ENCODE measurements at regions of chr4 and their contacts with region 1.

Region 1: GRCh38 chr4:15001869-15002658 is at the start of gene CPEB2:
- DNase-seq: peak; percentile 92
- H3K4me3 Mint-ChIP-seq: peak within 1 kb of the TSS; percentile 89
- H3K27ac Mint-ChIP-seq: peak within 1 kb of the TSS; percentile 95
- H3K4me1 Mint-ChIP-seq: peaks cover 7% of the 10 kb centered on the region
- H3K27me3 Mint-ChIP-seq: no peaks in the 10 kb centered on the region
- CTCF ChIP-seq: no peak
- total RNA-seq, gene CPEB2: 13.8 and 21.8 TPM in 2 replicates

Region 2: DNA sequence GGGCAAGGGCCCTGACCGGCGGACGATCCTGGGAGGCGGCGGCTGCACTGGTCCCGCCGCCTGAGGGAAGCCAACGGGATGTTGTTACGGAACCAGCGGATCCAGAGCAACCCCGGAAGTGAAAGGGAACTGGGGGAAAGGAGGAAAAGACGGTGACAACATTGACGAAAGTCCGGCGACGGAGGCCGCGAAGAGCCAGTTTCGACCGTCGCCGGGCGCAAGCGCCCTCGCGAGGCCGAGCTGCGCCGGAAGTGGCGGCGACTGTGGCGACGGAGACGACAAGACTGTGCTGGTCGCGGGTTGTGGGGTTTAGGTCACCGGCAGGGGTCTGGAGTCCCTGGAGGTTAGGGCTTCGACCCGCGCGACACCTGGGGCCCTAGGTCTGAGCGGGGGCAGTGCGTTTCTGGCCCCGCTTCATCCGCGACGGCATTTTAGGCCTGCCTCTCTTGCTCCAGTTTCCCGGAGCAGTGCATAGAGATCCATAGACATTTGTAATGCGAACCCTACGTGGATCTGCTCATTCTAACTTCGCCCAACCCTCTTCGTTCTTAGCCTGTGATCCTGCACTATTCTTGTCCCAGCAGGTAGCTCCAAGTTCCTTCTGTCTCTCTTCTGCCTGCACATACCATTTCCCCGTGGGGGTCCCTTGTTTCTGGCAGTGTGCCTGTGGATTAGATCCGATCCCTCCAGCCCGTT is 1374.3 kb before region 1 on chr4 and contains the start of gene BOD1L1:
- CTCF ChIA-PET with region 1: no interaction called
- POLR2A ChIA-PET with region 1: interaction called, 9 read pairs
- intact Hi-C with region 1: loop called (anchors 10 kb)
- DNase-seq: peak; percentile 91
- H3K4me3 Mint-ChIP-seq: peak within 1 kb of the TSS; percentile 89
- H3K27ac Mint-ChIP-seq: peak within 1 kb of the TSS; percentile 99
- H3K4me1 Mint-ChIP-seq: peaks cover 19% of the 10 kb centered on the region
- H3K27me3 Mint-ChIP-seq: no peaks in the 10 kb centered on the region
- CTCF ChIP-seq: peak; percentile 11
- total RNA-seq, gene BOD1L1: 46.8 and 55.4 TPM in 2 replicates

Region 3: GRCh38 chr4:13907255-13907751 is 1094.8 kb before region 1 on chr4:
- CTCF ChIA-PET with region 1: interaction called, 3 read pairs
- POLR2A ChIA-PET with region 1: interaction called, 5 read pairs
- intact Hi-C with region 1: loop called (anchors 5 kb)
- DNase-seq: peak; percentile 95
- H3K4me3 Mint-ChIP-seq: peak overlapping the region; percentile 9
- H3K27ac Mint-ChIP-seq: peak overlapping the region; percentile 96
- H3K4me1 Mint-ChIP-seq: peaks cover 40% of the 10 kb centered on the region
- H3K27me3 Mint-ChIP-seq: no peaks in the 10 kb centered on the region
- CTCF ChIP-seq: peak; percentile 35

Region 4: GRCh38 chr4:14671146-14671545 is 330.9 kb before region 1 on chr4:
- CTCF ChIA-PET with region 1: no interaction called
- POLR2A ChIA-PET with region 1: no interaction called
- intact Hi-C with region 1: no loop called
- DNase-seq: no peak
- H3K4me3 Mint-ChIP-seq: no peak overlapping the region
- H3K27ac Mint-ChIP-seq: no peak overlapping the region
- H3K4me1 Mint-ChIP-seq: peaks cover 7% of the 10 kb centered on the region
- H3K27me3 Mint-ChIP-seq: no peaks in the 10 kb centered on the region
- CTCF ChIP-seq: no peak

Region 5: DNA sequence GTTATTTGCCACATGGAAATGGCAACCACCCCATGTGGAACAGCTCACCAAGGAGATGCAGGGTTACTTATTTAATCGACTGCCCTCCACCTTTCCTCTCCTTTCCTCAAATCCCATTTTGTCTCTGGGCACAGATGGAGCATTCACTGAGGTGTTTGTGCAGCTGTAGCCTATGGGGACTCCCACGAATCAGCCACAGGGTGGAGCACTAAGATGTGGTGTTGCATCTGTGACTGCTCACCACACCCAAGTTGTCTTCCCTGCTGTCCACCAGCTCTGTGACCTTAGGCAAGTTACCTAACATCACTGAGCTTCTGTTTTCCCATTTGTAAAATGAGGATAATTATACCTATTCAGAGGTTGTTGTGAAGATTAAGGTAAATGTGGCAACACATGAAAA is 252.2 kb before region 1 on chr4:
- CTCF ChIA-PET with region 1: interaction called, 16 read pairs
- POLR2A ChIA-PET with region 1: interaction called, 17 read pairs
- intact Hi-C with region 1: loop called (anchors 1 kb)
- DNase-seq: peak; percentile 64
- H3K4me3 Mint-ChIP-seq: no peak overlapping the region
- H3K27ac Mint-ChIP-seq: no peak overlapping the region
- H3K4me1 Mint-ChIP-seq: no peaks in the 10 kb centered on the region
- H3K27me3 Mint-ChIP-seq: no peaks in the 10 kb centered on the region
- CTCF ChIP-seq: peak; percentile 25

Region 6: GRCh38 chr4:14888790-14889572 is 113.1 kb before region 1 on chr4:
- CTCF ChIA-PET with region 1: no interaction called
- POLR2A ChIA-PET with region 1: interaction called, 16 read pairs
- intact Hi-C with region 1: loop called (anchors 10 kb)
- DNase-seq: peak; percentile 60
- H3K4me3 Mint-ChIP-seq: no peak overlapping the region
- H3K27ac Mint-ChIP-seq: peak overlapping the region; percentile 70
- H3K4me1 Mint-ChIP-seq: peaks cover 15% of the 10 kb centered on the region
- H3K27me3 Mint-ChIP-seq: no peaks in the 10 kb centered on the region
- CTCF ChIP-seq: no peak

Region 7: GRCh38 chr4:14984448-14984847 is 17.6 kb before region 1 on chr4:
- CTCF ChIA-PET with region 1: no interaction called
- POLR2A ChIA-PET with region 1: interaction called, 22 read pairs
- intact Hi-C with region 1: no loop called
- DNase-seq: peak; percentile 58
- H3K4me3 Mint-ChIP-seq: no peak overlapping the region
- H3K27ac Mint-ChIP-seq: no peak overlapping the region
- H3K4me1 Mint-ChIP-seq: no peaks in the 10 kb centered on the region
- H3K27me3 Mint-ChIP-seq: no peaks in the 10 kb centered on the region
- CTCF ChIP-seq: no peak

Region 8: DNA sequence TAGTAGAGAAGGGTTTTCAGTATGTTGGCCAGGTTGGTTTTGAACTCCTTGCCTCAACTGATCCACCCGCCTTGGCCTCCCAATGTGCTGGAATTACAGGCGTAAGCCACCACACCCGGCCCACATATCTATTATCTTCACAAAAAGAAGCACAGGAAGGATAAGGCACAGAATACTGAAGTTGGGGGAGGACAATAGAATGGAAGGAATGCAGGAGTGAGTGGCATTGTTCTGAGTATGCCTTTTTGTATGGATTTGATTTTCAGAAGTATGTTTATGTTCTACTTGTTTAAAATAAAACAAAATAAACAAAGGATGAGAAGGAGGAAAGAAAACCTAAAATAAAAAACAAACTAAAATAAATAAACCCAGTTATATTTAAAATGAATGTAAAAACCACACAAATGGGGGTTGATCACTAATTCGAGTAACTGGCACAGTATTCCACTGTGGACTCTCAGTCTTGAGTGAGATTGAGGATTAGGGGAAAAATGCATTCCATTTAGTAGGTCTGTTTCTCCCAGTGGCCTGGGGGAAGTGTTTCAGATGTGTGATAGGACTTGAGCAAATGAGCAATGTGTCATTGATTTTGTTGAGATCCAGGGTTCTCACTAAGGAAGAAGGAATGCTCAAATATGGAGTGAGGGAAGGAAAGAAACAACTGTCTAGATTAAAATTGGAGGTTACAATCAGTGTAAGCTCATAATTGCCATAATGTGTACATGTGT is 316.7 kb after region 1 on chr4:
- CTCF ChIA-PET with region 1: no interaction called
- POLR2A ChIA-PET with region 1: no interaction called
- intact Hi-C with region 1: no loop called
- DNase-seq: no peak
- H3K4me3 Mint-ChIP-seq: no peak overlapping the region
- H3K27ac Mint-ChIP-seq: no peak overlapping the region
- H3K4me1 Mint-ChIP-seq: no peaks in the 10 kb centered on the region
- H3K27me3 Mint-ChIP-seq: no peaks in the 10 kb centered on the region
- CTCF ChIP-seq: no peak

Region 9: GRCh38 chr4:15457406-15458201 is 455.5 kb after region 1 on chr4:
- CTCF ChIA-PET with region 1: no interaction called
- POLR2A ChIA-PET with region 1: no interaction called
- intact Hi-C with region 1: loop called (anchors 10 kb)
- DNase-seq: peak; percentile 44
- H3K4me3 Mint-ChIP-seq: no peak overlapping the region
- H3K27ac Mint-ChIP-seq: no peak overlapping the region
- H3K4me1 Mint-ChIP-seq: peaks cover 8% of the 10 kb centered on the region
- H3K27me3 Mint-ChIP-seq: peaks cover 18% of the 10 kb centered on the region
- CTCF ChIP-seq: peak; percentile 60

Measured in MCF 10A (cell line).